ENCODE measurements at regions of chr3 and their contacts with region 1.

Region 1: DNA sequence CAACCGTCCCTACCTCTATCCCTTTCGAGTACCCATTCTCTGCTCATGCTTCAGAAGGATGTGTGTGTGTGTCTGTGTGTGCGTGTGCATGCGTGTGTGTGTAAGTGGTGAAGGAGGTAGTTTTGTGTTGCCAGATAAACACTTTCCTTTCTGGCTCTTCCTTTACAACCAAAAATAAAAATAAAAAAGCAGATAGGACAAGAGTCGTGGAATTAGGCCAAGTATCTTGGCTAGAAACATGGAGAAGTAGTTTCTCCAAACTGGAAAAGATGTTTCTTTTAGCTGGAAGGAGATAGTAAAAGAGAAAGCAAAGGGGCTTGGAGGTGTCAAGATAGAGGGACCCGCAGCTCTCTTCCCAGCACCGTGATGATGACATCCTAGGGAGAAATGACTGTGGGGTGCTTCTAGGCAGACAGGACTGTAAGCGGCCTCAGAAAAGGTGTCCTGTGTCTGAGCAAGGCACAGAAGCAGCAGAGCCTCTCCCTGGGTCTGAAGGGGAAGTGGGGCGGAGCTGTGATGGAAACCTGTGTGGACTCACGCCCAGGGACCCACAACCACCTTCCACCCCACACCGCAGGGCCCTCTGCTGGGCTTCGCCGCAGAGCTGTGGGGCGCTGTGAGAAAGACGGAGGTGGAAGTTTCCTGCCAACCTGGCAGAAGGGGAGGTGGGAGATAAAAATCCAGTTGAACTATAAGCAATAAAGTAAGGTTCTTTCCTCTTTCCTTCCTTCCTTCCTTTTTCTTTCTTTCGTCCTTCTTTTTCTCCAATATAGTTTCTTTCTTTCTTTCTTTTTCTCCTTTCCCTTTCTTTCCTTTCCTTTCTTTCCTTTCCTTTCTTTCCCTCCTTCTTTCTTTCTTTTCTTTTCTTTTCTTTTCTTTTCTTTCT is 35.3 kb downstream of the MUC20 start:
- DNase-seq: peak; percentile 81
- H3K4me3 Mint-ChIP-seq: no peak overlapping the region
- H3K27ac Mint-ChIP-seq: peak overlapping the region; percentile 50
- H3K4me1 Mint-ChIP-seq: peaks cover 17% of the 10 kb centered on the region
- H3K27me3 Mint-ChIP-seq: peaks cover 26% of the 10 kb centered on the region

Region 2: DNA sequence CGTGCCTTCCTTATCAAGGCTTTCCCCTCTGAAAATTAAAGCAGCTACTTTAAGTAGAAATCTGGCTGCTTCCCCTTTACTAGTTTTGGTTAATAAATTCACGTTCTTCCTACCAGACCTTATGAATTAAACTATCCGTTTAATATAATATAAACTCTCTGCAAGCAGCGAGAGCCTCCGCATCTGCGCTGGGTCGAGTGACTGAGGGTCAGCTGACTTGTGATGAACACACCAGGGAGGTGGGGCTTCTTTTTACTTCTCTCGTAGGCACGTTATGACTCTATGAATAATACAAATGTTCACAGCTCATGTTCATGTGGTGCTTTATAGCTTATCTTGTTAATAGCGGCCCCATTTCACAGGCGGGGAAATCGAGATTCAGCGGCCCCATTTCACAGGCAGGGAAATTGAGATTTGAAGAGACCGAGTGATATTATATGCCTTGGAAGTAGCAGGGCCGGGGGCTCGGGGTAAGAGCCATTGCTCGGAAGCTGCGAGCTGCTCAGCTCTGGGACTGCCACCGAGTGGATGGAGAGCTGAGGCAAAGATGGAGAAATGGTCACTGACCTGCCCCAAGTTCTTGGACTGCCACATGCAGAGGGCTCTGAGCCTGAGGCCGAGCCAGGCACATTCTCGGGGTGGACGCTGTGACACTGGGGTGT is 47.4 kb after region 1 on chr3:
- intact Hi-C with region 1: loop called (anchors 5 kb)
- DNase-seq: no peak
- H3K4me3 Mint-ChIP-seq: peak overlapping the region; percentile 62
- H3K27ac Mint-ChIP-seq: peak overlapping the region; percentile 87
- H3K4me1 Mint-ChIP-seq: peaks cover 57% of the 10 kb centered on the region
- H3K27me3 Mint-ChIP-seq: no peaks in the 10 kb centered on the region

Measured in activated CD4-positive, alpha-beta T cell treated with anti-CD3 and anti-CD28 coated beads, Interleukin-2, amount 10 ng/mL, durations not matched to agents 24 days and 14 days (primary cell).